GM13977 (cell line): ENCODE measurements at regions of chr4 and their contacts with region 1.

Region 1: GRCh38 chr4:38319456-38320342 is 344.3 kb upstream of the KLF3 start:
- DNase-seq: peak; percentile 89
- CTCF ChIP-seq: peak; percentile 95

Region 2: DNA sequence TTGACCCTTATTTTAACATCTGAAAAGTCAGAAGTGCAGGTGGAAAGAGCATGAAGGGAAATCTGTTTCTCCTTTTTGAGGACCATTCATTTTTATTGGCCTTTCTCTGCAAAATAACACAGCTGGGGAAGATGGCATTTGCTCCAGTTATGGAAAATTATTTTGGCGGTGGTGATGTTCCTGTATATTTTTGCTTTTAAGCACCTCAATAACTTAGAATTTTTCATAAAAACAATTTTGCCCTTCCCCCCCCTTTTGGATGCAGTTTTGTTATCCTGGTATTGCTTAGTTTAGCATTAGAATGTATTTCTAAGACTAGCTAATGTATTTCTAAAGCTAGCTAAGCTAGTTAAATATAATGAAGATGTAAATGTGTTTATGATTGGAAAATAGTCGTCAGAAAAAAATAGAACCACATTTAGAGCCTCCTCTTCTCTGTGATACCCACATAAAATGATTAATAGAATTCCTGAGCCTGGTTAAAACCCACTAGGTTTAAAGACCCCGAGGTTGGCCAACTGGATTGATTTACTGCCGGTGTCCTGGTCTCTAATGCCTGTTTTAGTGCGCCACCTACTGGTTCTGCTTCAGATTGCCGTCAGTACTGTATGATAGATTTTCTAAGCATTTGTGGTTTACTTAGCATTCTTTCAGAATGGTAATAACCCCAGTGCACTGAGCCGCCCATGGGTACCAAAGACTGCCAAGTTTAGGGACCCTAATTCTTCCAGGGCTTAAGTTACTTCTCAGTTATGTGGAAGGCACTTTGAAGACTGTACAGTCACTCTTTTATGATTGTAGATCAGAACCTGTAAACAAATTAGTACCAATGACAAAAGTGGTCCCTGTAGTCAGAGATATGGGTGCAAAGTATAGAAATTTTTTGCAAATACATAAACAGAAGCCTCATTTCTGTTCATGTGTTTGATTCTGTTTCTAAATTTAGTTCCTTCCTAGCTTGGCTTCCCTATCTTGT is 355.7 kb after region 1 on chr4:
- in situ Hi-C with region 1: loop called (anchors 5 kb)
- DNase-seq: peak; percentile 71
- CTCF ChIP-seq: peak; percentile 87